ENCODE measurements at regions of chr11 and their contacts with region 1.

Region 1: GRCh38 chr11:111982019-111982464 is 43.2 kb upstream of the DLAT start:
- DNase-seq: peak; percentile 84
- ATAC-seq: peak; percentile 57
- H3K4me3 ChIP-seq: no peak overlapping the region
- H3K27ac ChIP-seq: peak overlapping the region; percentile 24
- H3K4me1 ChIP-seq: peaks cover 35% of the 10 kb centered on the region
- H3K27me3 ChIP-seq: no peaks in the 10 kb centered on the region
- CTCF ChIP-seq: peak; percentile 90

Region 2: DNA sequence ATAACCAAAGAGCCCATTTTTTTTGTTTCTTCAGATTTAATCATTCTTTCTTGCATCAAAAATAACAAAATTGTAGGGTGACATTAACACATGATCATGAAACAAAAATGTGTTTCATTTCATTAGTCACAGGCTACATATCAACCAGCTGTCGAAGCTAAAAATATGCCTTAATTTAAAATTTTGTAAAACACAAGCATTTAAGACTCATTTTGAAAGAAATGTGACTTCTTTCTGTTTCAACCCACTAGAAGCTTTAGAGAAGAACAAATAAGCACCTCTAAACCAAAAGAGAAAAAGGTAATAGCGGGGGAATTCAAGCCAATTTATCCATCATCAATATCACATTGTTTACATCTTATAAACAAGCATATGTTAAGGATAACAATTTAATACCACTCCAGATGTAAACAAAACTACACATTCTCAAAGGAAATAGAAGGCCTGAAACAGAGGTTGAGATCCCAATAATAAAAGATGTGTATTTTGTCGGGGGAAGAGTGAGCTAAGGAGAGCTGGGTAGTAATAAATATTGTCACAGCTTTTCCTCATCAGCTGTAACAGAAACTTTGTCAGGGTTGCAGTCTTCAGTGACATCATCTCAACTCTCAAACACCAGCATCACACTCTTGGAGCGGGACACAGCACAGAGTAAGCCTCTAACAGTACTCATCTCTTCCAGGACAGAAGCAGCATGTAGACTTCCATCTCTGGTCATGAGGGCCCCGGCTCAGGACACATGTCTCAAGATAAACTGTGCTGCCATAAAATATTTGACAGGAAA is 152.7 kb before region 1 on chr11:
- CTCF ChIA-PET with region 1: no interaction called
- POLR2A ChIA-PET with region 1: no interaction called
- intact Hi-C with region 1: no loop called
- DNase-seq: no peak
- ATAC-seq: no peak
- H3K4me3 ChIP-seq: no peak overlapping the region
- H3K27ac ChIP-seq: no peak overlapping the region
- H3K4me1 ChIP-seq: no peaks in the 10 kb centered on the region
- H3K27me3 ChIP-seq: no peaks in the 10 kb centered on the region
- CTCF ChIP-seq: no peak

Region 3: GRCh38 chr11:111960916-111961315 is 21.1 kb before region 1 on chr11:
- CTCF ChIA-PET with region 1: interaction called, 6 read pairs
- POLR2A ChIA-PET with region 1: interaction called, 3 read pairs
- intact Hi-C with region 1: loop called (anchors 2 kb)
- DNase-seq: peak; percentile 94
- ATAC-seq: peak; percentile 97
- H3K4me3 ChIP-seq: no peak overlapping the region
- H3K27ac ChIP-seq: peak overlapping the region; percentile 82
- H3K4me1 ChIP-seq: peaks cover 16% of the 10 kb centered on the region
- H3K27me3 ChIP-seq: no peaks in the 10 kb centered on the region
- CTCF ChIP-seq: no peak

Region 4: DNA sequence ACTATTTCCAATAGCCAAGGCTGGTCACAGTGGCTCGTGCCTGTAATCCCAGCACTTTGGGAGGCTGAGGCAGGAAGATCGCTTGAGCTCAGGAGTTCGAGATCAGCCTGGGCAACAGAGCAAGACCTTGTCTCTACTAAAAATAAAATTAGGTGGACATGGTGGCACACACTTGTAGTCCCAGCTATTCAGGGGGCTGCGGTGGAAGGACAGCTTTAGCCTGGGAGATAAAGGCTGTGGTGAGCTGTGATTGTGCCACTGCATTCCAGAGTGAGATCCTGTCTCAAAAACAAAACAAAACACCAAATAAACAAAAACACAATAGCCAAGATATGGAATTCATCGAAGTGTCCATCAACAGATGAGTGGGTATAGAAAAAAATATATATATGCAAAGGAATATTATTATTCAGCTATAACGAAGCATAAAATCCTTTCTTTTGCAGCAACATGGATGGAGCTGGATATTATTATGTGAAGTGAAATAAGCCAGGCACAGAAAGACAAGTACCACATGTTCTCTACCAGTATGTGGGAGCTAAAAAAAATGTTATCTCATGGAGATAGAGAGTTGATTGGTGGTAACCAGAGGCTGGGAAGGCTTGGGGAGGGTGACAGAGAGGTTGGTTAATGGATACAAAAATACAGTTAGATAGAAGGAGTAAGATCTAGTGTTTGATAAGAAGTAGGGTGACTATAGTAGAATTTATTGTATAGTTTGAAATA is 20.6 kb after region 1 on chr11:
- CTCF ChIA-PET with region 1: no interaction called
- POLR2A ChIA-PET with region 1: no interaction called
- intact Hi-C with region 1: no loop called
- DNase-seq: no peak
- ATAC-seq: no peak
- H3K4me3 ChIP-seq: no peak overlapping the region
- H3K27ac ChIP-seq: no peak overlapping the region
- H3K4me1 ChIP-seq: no peaks in the 10 kb centered on the region
- H3K27me3 ChIP-seq: no peaks in the 10 kb centered on the region
- CTCF ChIP-seq: no peak

Region 5: DNA sequence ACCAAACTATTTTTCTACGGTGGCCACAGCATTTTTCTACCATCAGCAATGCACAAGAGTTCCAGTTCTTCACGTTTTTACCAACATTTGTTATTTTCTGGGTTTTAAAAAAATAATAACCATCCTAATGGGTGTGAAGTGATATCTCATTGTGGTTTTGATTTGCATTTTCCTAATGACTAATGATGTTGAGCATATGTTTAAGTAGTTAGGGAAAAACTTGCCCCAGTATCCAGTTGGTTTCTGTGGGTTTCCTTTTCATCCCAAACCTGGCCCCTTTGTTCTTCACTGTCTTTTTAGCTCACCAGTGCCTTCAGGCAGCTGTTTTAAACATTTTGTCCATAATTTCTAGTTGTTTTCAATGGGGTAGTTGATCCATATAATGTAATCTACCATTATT is 229.5 kb after region 1 on chr11:
- CTCF ChIA-PET with region 1: no interaction called
- POLR2A ChIA-PET with region 1: no interaction called
- intact Hi-C with region 1: no loop called
- DNase-seq: no peak
- ATAC-seq: no peak
- H3K4me3 ChIP-seq: no peak overlapping the region
- H3K27ac ChIP-seq: no peak overlapping the region
- H3K4me1 ChIP-seq: peaks cover 19% of the 10 kb centered on the region
- H3K27me3 ChIP-seq: no peaks in the 10 kb centered on the region
- CTCF ChIP-seq: no peak